Calu3 (cell line): ENCODE measurements at regions of chr13 and their contacts with region 1.

Region 1: GRCh38 chr13:81350056-81350455 is 1009.1 kb upstream of the SPRY2 start:
- DNase-seq: no peak
- H3K4me3 Mint-ChIP-seq: no peak overlapping the region
- H3K27ac Mint-ChIP-seq: no peak overlapping the region
- H3K4me1 Mint-ChIP-seq: no peaks in the 10 kb centered on the region
- H3K27me3 Mint-ChIP-seq: no peaks in the 10 kb centered on the region
- CTCF ChIP-seq: no peak

Region 2: GRCh38 chr13:81480634-81481033 is 130.6 kb after region 1 on chr13:
- CTCF ChIA-PET with region 1: no interaction called
- intact Hi-C with region 1: loop called (anchors 5 kb)
- DNase-seq: no peak
- H3K4me3 Mint-ChIP-seq: no peak overlapping the region
- H3K27ac Mint-ChIP-seq: no peak overlapping the region
- H3K4me1 Mint-ChIP-seq: no peaks in the 10 kb centered on the region
- H3K27me3 Mint-ChIP-seq: no peaks in the 10 kb centered on the region
- CTCF ChIP-seq: no peak